Activated CD8-positive, alpha-beta T cell treated with anti-CD3 and anti-CD28 coated beads, Interleukin-2, amount 10 ng/mL, durations not matched to agents 7 days and 5 days (primary cell): ENCODE measurements at regions of chr5 and their contacts with region 1.

Region 1: GRCh38 chr5:41869739-41870626 is at the start of gene OXCT1:
- DNase-seq: peak; percentile 95
- ATAC-seq: peak; percentile 95
- H3K4me3 Mint-ChIP-seq: peak within 1 kb of the TSS; percentile 88
- H3K27ac Mint-ChIP-seq: peak within 1 kb of the TSS; percentile 91
- H3K4me1 Mint-ChIP-seq: peaks cover 57% of the 10 kb centered on the region
- H3K27me3 Mint-ChIP-seq: no peaks in the 10 kb centered on the region
- total RNA-seq, gene OXCT1: 59.3 to 61.0 TPM

Region 2: DNA sequence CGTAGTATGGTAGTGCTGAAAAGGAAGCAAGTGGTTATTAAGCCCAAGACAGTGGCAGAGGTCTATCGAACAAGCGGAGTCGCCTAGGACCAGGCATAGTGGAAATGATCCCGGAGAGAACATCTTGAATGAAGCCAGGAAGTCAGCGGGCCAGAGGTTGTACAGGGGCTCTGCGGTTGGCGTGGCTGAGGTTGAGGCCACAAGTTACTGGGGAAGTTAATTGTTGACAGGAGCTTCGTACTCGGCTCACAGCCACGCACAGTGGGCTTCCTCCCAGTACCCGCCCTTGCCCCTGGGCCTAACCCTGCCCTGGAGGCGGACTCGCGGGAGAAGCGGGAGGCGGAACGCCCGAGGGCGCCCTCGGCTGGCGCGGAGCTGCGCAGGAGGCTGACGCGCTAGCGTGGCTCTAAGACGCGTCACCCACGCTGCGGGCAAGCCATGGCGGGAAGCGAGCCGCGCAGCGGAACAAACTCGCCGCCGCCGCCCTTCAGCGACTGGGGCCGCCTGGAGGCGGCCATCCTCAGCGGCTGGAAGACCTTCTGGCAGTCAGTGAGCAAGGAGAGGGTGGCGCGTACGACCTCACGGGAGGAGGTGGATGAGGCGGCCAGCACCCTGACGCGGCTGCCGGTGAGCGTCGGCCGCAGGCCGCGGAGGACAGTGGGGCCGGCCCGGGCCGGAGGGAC is 55.0 kb after region 1 on chr5 and contains the start of gene FBXO4:
- CTCF ChIA-PET with region 1: interaction called, 3 read pairs
- POLR2A ChIA-PET with region 1: interaction called, 19 read pairs
- DNase-seq: peak; percentile 89
- ATAC-seq: peak; percentile 98
- H3K4me3 Mint-ChIP-seq: peak within 1 kb of the TSS; percentile 86
- H3K27ac Mint-ChIP-seq: peak within 1 kb of the TSS; percentile 89
- H3K4me1 Mint-ChIP-seq: peaks cover 14% of the 10 kb centered on the region
- H3K27me3 Mint-ChIP-seq: no peaks in the 10 kb centered on the region
- total RNA-seq, gene FBXO4: 11.6 to 14.4 TPM